ENCODE measurements at regions of chr19 and their contacts with region 1.

Region 1: GRCh38 chr19:49580264-49581006 is at the start of gene NOSIP:
- DNase-seq: peak; percentile 98
- H3K4me3 Mint-ChIP-seq: peak within 1 kb of the TSS; percentile 92
- H3K27ac Mint-ChIP-seq: peak within 1 kb of the TSS; percentile 96
- H3K4me1 Mint-ChIP-seq: peaks cover 22% of the 10 kb centered on the region
- H3K27me3 Mint-ChIP-seq: no peaks in the 10 kb centered on the region
- CTCF ChIP-seq: no peak
- total RNA-seq, gene NOSIP: 54.4 and 57.9 TPM in 2 replicates

Region 2: DNA sequence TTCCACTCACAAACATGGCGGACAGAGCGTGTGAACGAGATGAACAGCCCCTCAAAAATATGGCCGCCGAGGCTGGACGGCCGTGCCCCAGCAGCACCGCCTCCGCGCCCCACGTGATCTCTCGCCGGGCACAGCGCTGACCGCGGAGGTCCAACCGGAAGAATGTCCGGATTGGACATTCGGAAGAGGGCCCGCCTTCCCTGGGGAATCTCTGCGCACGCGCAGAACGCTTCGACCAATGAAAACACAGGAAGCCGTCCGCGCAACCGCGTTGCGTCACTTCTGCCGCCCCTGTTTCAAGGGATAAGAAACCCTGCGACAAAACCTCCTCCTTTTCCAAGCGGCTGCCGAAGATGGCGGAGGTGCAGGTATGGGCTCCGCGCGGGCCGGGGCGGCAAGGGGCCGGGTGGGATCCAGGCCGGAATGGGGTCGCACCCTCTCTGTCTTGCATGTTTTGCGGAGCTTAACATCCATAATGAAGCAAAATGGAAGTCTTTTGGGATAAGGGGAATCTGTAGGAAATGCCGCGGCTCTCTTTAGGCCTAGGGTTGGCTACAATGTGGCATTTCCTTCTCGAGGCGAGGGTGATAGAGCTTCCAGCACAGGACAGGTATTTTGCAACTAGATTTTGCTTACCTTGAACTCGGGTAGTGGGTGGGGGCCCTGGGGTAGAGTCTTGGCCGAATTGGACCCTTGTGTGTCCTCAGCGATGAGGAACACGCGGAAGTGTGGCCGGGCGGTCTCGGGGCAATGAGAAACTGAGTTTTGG is 93.0 kb before region 1 on chr19 and contains the start of gene RPL13A:
- CTCF ChIA-PET with region 1: no interaction called
- POLR2A ChIA-PET with region 1: interaction called, 23 read pairs
- intact Hi-C with region 1: no loop called
- DNase-seq: peak; percentile 100
- H3K4me3 Mint-ChIP-seq: peak within 1 kb of the TSS; percentile 95
- H3K27ac Mint-ChIP-seq: peak within 1 kb of the TSS; percentile 99
- H3K4me1 Mint-ChIP-seq: no peaks in the 10 kb centered on the region
- H3K27me3 Mint-ChIP-seq: no peaks in the 10 kb centered on the region
- CTCF ChIP-seq: no peak
- total RNA-seq, gene RPL13A: 3,716 and 3,819 TPM in 2 replicates

Region 3: DNA sequence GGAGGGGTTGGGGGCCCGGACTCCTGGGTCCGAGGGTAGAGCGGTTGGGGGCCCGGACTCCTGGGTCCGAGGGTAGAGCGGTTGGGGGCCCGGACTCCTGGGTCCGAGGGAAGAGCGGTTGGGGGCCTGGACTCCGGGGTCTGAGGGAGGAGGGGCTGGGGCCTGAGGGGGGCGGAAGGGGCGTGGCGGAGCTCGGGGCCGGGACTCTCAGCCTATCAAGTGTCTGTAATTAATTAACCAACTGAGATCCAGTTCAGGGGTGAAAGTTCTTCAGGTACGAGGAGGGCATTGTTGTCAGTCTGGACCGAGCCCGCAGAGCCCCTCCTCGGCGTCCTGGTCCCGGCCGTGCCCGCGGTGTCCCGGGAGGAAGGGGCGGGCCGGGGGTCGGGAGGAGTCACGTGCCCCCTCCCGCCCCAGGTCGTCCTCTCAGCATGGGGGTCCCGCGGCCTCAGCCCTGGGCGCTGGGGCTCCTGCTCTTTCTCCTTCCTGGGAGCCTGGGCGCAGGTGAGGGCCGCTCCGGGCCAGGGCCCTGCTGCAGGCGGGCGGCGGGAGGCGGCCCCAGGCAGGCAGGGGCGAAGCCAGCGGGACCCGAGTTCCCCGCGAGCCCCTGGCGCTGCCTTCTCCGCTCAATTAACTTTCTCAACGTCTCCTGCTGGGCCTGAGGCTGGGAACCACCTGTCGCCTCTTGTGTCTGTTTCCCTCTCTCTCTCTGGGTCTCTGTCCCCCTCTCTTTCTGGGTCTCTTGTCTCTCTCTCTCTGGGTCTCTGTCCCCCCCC is 67.3 kb before region 1 on chr19:
- CTCF ChIA-PET with region 1: no interaction called
- POLR2A ChIA-PET with region 1: no interaction called
- intact Hi-C with region 1: no loop called
- DNase-seq: no peak
- H3K4me3 Mint-ChIP-seq: peak overlapping the region; percentile 54
- H3K27ac Mint-ChIP-seq: no peak overlapping the region
- H3K4me1 Mint-ChIP-seq: peaks cover 6% of the 10 kb centered on the region
- H3K27me3 Mint-ChIP-seq: peaks cover 11% of the 10 kb centered on the region
- CTCF ChIP-seq: no peak

Region 4: DNA sequence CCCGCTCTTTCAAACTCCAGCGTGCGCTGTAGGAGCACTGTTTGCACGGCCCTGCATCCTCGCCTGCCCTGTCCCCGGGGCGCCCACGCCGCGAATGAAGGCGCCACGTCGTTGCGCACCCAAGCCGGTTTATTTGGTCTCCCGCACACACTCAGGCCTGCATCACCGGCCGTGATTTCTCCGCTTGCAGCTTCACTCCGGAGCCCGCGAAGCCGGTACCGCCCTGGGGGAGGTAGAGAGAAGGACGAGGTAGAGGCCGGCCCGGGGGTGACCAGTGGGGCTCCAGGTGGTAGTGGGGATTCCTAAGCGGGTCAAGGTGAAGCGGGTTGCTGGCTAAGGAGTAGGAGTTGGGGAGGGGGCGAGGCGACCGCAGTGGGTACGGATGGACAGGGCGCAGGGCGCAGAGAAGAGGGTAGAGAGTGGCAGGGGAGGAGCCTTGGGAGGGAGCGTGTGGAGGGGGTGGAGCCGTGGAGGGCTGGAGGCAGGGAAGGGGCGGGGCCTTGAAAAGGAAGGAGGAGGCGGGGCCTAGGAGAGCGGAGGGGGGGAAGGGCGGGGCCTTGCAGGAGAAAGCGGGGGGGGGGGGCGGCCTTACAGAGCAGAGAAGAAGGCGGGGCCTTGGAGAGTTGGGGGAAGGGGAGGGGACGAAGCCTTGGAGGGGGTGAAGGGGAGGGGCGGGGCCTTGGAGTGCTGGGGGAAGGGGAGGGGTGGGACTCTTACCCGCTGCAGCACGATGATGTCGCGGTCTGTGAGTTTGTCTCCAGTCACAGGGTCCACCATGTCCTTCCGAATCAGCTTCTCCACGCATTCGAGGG is 24.6 kb before region 1 on chr19:
- CTCF ChIA-PET with region 1: no interaction called
- POLR2A ChIA-PET with region 1: interaction called, 10 read pairs
- intact Hi-C with region 1: no loop called
- DNase-seq: no peak
- H3K4me3 Mint-ChIP-seq: no peak overlapping the region
- H3K27ac Mint-ChIP-seq: no peak overlapping the region
- H3K4me1 Mint-ChIP-seq: peaks cover 12% of the 10 kb centered on the region
- H3K27me3 Mint-ChIP-seq: no peaks in the 10 kb centered on the region
- CTCF ChIP-seq: no peak

Region 5: DNA sequence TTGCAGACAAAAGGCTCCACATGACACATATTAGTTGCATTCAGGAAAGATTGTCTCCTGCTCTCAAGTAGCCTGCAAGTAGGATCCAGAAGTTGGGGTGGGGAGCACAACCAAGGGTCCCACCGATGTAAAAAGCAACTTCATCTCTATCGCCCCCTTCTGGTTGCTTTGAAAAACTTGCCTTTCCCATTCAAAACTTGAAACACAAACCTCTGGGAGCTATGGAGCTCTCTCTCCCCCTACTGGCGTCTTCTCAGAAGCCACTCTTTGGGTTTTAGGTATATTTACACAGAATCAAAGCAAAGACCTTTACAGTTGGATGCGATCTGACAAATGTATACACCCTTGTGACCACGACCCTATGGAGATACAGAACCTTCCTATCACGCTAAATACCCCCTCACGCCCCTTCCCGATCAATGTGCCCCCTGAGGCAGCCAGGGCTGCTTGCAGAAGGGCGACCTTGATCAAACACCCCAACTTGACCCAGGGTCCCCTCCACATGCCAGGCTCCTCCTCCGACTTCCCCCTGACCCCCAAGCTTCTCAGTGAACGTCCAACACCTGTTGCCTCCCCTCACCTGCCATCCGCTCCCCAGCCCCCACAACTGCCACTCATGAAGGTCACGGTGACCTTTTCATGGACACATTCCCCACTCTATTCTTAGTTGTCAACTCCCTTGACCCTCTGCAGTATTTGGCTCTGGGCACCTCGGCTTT is 10.1 kb before region 1 on chr19:
- CTCF ChIA-PET with region 1: interaction called, 40 read pairs
- POLR2A ChIA-PET with region 1: interaction called, 35 read pairs
- intact Hi-C with region 1: no loop called
- DNase-seq: peak; percentile 91
- H3K4me3 Mint-ChIP-seq: no peak overlapping the region
- H3K27ac Mint-ChIP-seq: no peak overlapping the region
- H3K4me1 Mint-ChIP-seq: peaks cover 16% of the 10 kb centered on the region
- H3K27me3 Mint-ChIP-seq: no peaks in the 10 kb centered on the region
- CTCF ChIP-seq: peak; percentile 97

Region 6: DNA sequence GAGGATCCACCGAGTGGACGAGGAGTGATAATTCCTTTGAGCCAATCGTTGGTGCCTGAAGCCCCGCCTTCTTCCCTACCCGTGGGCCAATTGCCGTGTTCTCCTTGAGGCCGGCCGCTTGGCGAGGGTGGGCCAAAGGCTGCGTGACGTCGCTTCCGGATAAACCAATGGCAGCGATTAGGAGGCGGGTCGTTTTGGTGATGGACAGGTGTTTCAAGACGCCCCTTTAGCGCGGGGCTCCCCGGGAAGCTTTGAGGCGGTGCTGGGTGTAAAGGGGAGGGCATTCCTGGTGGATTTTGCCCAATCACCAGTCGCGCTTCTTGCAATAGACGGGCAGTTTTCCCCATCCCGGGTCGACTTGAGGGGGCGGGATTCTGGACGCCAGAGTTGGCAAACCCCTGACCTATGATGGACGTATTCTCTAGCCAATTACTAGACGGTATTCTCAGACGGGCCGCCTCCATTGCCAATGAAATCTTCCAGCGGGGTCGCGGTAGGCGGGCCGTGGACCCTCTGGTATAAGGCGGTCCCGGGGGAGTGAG is 96.3 kb after region 1 on chr19:
- CTCF ChIA-PET with region 1: interaction called, 3 read pairs
- POLR2A ChIA-PET with region 1: interaction called, 20 read pairs
- intact Hi-C with region 1: no loop called
- DNase-seq: peak; percentile 100
- H3K4me3 Mint-ChIP-seq: peak overlapping the region; percentile 96
- H3K27ac Mint-ChIP-seq: peak overlapping the region; percentile 99
- H3K4me1 Mint-ChIP-seq: peaks cover 20% of the 10 kb centered on the region
- H3K27me3 Mint-ChIP-seq: no peaks in the 10 kb centered on the region
- CTCF ChIP-seq: no peak